ENCODE measurements at regions of chr10 and their contacts with region 1.

Region 1: GRCh38 chr10:88820748-88821389 is 18.3 kb downstream of the LIPM start:
- DNase-seq: no peak
- ATAC-seq: no peak
- H3K4me3 ChIP-seq: no peak overlapping the region
- H3K27ac ChIP-seq: no peak overlapping the region
- H3K4me1 ChIP-seq: 0 out of 2 replicates have a peak, but pooled peaks cover 3% of the 10 kb centered on the region
- H3K27me3 ChIP-seq: 0 out of 4 replicates have a peak, but pooled peaks cover 0 to 2% of the 10 kb centered on the region in 2 experiments
- CTCF ChIP-seq: no peak
- EP300 ChIP-seq: no peak
- POLR2A ChIP-seq: no peak
- RAD21 ChIP-seq: no peak

Region 2: DNA sequence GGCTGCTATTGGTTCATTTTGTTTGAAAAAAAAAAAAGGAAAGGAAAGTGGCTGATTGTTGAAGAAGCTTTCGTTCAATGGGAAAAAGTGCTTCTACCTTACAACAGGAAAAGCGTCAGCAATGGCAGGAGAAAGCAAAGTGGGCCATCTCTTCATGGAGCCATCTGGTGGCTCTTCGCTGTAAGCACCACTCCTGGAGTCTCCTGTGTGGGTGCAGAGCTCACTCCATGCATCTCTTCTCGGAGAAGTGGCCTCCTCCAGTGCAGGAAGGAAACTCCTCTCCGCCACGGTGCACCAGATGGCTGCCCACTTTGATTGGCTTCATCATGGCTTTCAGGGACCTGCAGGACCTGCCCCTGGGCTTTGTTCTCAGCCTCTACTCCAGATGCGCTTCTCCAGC is 706.5 kb before region 1 on chr10:
- CTCF ChIA-PET with region 1: no interaction called
- POLR2A ChIA-PET with region 1: no interaction called
- RAD21 ChIA-PET with region 1: no interaction called
- SMC1A ChIA-PET with region 1: no interaction called
- in situ Hi-C with region 1: no loop called
- intact Hi-C with region 1: no loop called
- DNase-seq: no peak
- ATAC-seq: peak; percentile 61
- H3K4me3 ChIP-seq: no peak overlapping the region
- H3K27ac ChIP-seq: peak overlapping the region; percentile 86
- H3K4me1 ChIP-seq: peaks cover 87% of the 10 kb centered on the region
- H3K27me3 ChIP-seq: no peaks in the 10 kb centered on the region
- CTCF ChIP-seq: peak; percentile 69 to 73 (median 72)
- EP300 ChIP-seq: no peak
- POLR2A ChIP-seq: no peak
- RAD21 ChIP-seq: peak; percentile 86

Region 3: GRCh38 chr10:88728107-88728763 is 92.6 kb before region 1 on chr10:
- CTCF ChIA-PET with region 1: interaction called, 13 read pairs
- POLR2A ChIA-PET with region 1: no interaction called
- RAD21 ChIA-PET with region 1: interaction called, 5 read pairs
- SMC1A ChIA-PET with region 1: interaction called, 6 read pairs
- in situ Hi-C with region 1: no loop called
- intact Hi-C with region 1: no loop called
- DNase-seq: no peak
- ATAC-seq: peak; percentile 53
- H3K4me3 ChIP-seq: no peak overlapping the region
- H3K27ac ChIP-seq: no peak overlapping the region
- H3K4me1 ChIP-seq: peaks cover 3% of the 10 kb centered on the region
- H3K27me3 ChIP-seq: no peaks in the 10 kb centered on the region
- CTCF ChIP-seq: peak; percentile 39 to 65 (median 51); a peak in 5 of 6 replicates
- EP300 ChIP-seq: no peak
- POLR2A ChIP-seq: no peak
- RAD21 ChIP-seq: peak; percentile 79

Region 4: DNA sequence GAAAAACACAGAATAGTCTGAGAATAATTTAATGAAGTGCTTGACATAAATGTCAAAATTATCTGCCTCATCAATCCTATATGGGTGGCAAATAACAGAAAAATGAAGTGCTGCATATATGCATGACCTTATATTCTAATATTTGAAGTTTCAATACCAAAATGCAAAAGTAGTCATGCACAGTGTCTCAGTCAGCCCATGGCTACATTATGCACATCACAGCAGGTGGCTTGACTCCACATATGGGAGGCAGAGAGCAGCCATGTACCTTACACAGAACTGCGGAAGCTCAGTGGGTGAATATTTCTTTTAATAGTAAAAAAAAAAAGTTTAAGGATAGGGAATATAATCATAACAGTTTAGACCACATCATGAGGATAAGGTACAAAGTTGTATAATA is 78.4 kb before region 1 on chr10:
- CTCF ChIA-PET with region 1: no interaction called
- POLR2A ChIA-PET with region 1: no interaction called
- RAD21 ChIA-PET with region 1: no interaction called
- SMC1A ChIA-PET with region 1: no interaction called
- in situ Hi-C with region 1: no loop called
- intact Hi-C with region 1: no loop called
- DNase-seq: no peak
- ATAC-seq: no peak
- H3K4me3 ChIP-seq: no peak overlapping the region
- H3K27ac ChIP-seq: no peak overlapping the region
- H3K4me1 ChIP-seq: no peaks in the 10 kb centered on the region; the same call in 1 of the 2 replicates
- H3K27me3 ChIP-seq: no peaks in the 10 kb centered on the region; a peak in 1 of 4 replicates
- CTCF ChIP-seq: no peak
- EP300 ChIP-seq: no peak
- POLR2A ChIP-seq: no peak
- RAD21 ChIP-seq: no peak

Measured in GM12878 (cell line).